B cell (primary cell): ENCODE measurements at regions of chr6 and their contacts with region 1.

Region 1: DNA sequence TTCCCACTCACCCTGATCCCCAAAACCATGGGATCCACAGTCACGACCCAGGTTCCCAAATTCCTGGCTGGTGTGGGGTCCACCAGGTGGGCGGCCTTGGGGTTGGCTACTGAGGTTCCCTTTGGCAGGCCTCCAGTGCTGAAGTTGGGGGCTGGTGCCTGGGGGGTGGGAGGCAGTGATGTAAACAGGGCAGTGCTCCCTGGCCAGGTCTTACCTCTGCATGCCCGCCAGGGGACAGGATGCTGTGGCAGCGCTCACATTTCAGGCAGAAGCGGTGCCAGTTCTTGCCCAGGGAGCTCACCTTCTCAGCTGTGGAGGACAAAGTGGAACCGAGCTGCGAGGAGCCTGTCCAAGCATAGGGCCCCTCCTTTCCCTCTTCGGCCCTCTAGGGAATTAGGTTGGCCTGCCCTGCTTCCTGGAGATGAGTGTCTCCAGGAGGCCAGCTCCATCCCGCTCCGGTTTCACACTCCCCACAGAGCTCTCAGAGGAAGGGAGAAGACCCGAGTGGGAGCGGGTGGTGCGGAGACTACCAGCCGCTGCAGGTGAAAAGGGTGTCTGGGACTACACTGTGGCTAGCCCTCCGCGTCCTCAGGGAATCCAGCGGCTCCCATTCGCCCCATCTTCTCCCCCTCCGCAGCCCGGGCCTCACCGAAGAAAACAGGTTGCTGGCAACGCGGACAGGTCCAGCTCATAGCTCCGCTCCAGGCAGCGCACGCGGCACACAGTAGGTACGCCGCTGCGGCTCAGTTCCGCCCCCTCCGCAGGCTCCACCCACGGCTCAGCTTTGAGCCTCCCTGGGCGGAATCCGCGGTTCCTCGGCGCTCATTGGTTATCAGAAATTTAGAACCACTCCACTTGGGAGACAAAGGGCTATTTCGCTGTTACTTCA is at the start of gene CRIP3:
- DNase-seq: peak; percentile 77
- ATAC-seq: peak; percentile 77
- H3K4me3 ChIP-seq: peak within 1 kb of the TSS in 4 of 5 experiments; percentile 52 to 68 (median 60)
- H3K4me3 Mint-ChIP-seq: peak within 1 kb of the TSS; percentile 92
- H3K27ac ChIP-seq: peak within 1 kb of the TSS; percentile 6 to 15
- H3K27ac Mint-ChIP-seq: peak within 1 kb of the TSS; percentile 71
- H3K4me1 ChIP-seq: peaks cover 40 to 43% of the 10 kb centered on the region in 2 donors
- H3K4me1 Mint-ChIP-seq: peaks cover 43% of the 10 kb centered on the region
- H3K27me3 ChIP-seq: no peaks in the 10 kb centered on the region
- H3K27me3 Mint-ChIP-seq: no peaks in the 10 kb centered on the region
- CTCF ChIP-seq: peak; percentile 74
- total RNA-seq, gene CRIP3: 25.8 and 27.9 TPM in 2 replicates

Region 2: GRCh38 chr6:43263314-43264178 is 44.8 kb before region 1 on chr6:
- CTCF ChIA-PET with region 1: interaction called, 10 read pairs
- POLR2A ChIA-PET with region 1: no interaction called
- intact Hi-C with region 1: no loop called
- DNase-seq: peak; percentile 84
- ATAC-seq: peak; percentile 98
- H3K4me3 ChIP-seq: no peak overlapping the region
- H3K4me3 Mint-ChIP-seq: no peak overlapping the region
- H3K27ac ChIP-seq: no peak overlapping the region
- H3K27ac Mint-ChIP-seq: no peak overlapping the region
- H3K4me1 ChIP-seq: no peaks in the 10 kb centered on the region
- H3K4me1 Mint-ChIP-seq: peaks cover 8% of the 10 kb centered on the region
- H3K27me3 ChIP-seq: peaks cover 0 to under 1% (median 0%) of the 10 kb centered on the region in 4 experiments
- H3K27me3 Mint-ChIP-seq: peaks cover 4% of the 10 kb centered on the region
- CTCF ChIP-seq: peak; percentile 84

Region 3: GRCh38 chr6:43297644-43298564 is 10.4 kb before region 1 on chr6 and contains the start of gene SLC22A7:
- CTCF ChIA-PET with region 1: interaction called, 19 read pairs
- POLR2A ChIA-PET with region 1: no interaction called
- intact Hi-C with region 1: no loop called
- DNase-seq: no peak
- ATAC-seq: no peak
- H3K4me3 ChIP-seq: no peak within 1 kb of the TSS
- H3K4me3 Mint-ChIP-seq: no peak within 1 kb of the TSS
- H3K27ac ChIP-seq: no peak within 1 kb of the TSS
- H3K27ac Mint-ChIP-seq: no peak within 1 kb of the TSS
- H3K4me1 ChIP-seq: no peaks in the 10 kb centered on the region
- H3K4me1 Mint-ChIP-seq: peaks cover 4% of the 10 kb centered on the region
- H3K27me3 ChIP-seq: peaks cover 0 to 19% (median 1%) of the 10 kb centered on the region in 4 experiments
- H3K27me3 Mint-ChIP-seq: peaks cover 14% of the 10 kb centered on the region
- CTCF ChIP-seq: no peak
- total RNA-seq, gene SLC22A7: not detected in 2 replicates

Region 4: GRCh38 chr6:43334466-43335095 is 26.2 kb after region 1 on chr6:
- CTCF ChIA-PET with region 1: interaction called, 48 read pairs
- POLR2A ChIA-PET with region 1: interaction called, 3 read pairs
- intact Hi-C with region 1: loop called (anchors 1 kb)
- DNase-seq: peak; percentile 49
- ATAC-seq: no peak
- H3K4me3 ChIP-seq: no peak overlapping the region
- H3K4me3 Mint-ChIP-seq: no peak overlapping the region
- H3K27ac ChIP-seq: peak overlapping the region in 1 of 2 donors; percentile 48
- H3K27ac Mint-ChIP-seq: peak overlapping the region; percentile 57
- H3K4me1 ChIP-seq: peaks cover 28 to 29% of the 10 kb centered on the region in 2 donors
- H3K4me1 Mint-ChIP-seq: peaks cover 43% of the 10 kb centered on the region
- H3K27me3 ChIP-seq: no peaks in the 10 kb centered on the region
- H3K27me3 Mint-ChIP-seq: no peaks in the 10 kb centered on the region
- CTCF ChIP-seq: peak; percentile 51

Region 5: GRCh38 chr6:43369174-43370022 is 61.1 kb after region 1 on chr6 and contains the start of gene ZNF318:
- CTCF ChIA-PET with region 1: interaction called, 12 read pairs
- POLR2A ChIA-PET with region 1: interaction called, 5 read pairs
- intact Hi-C with region 1: loop called (anchors 5 kb)
- DNase-seq: peak; percentile 98
- ATAC-seq: peak; percentile 90
- H3K4me3 ChIP-seq: peak within 1 kb of the TSS; percentile 83 to 95 (median 88)
- H3K4me3 Mint-ChIP-seq: peak within 1 kb of the TSS; percentile 98
- H3K27ac ChIP-seq: peak within 1 kb of the TSS; percentile 92 to 94
- H3K27ac Mint-ChIP-seq: peak within 1 kb of the TSS; percentile 97
- H3K4me1 ChIP-seq: peaks cover 64 to 69% of the 10 kb centered on the region in 2 donors
- H3K4me1 Mint-ChIP-seq: peaks cover 72% of the 10 kb centered on the region
- H3K27me3 ChIP-seq: no peaks in the 10 kb centered on the region
- H3K27me3 Mint-ChIP-seq: no peaks in the 10 kb centered on the region
- CTCF ChIP-seq: no peak
- total RNA-seq, gene ZNF318: 79.7 and 80.9 TPM in 2 replicates

Region 6: GRCh38 chr6:43391440-43392031 is 83.2 kb after region 1 on chr6:
- CTCF ChIA-PET with region 1: interaction called, 28 read pairs
- POLR2A ChIA-PET with region 1: no interaction called
- intact Hi-C with region 1: no loop called
- DNase-seq: no peak
- ATAC-seq: no peak
- H3K4me3 ChIP-seq: no peak overlapping the region
- H3K4me3 Mint-ChIP-seq: peak overlapping the region; percentile 20
- H3K27ac ChIP-seq: no peak overlapping the region
- H3K27ac Mint-ChIP-seq: no peak overlapping the region
- H3K4me1 ChIP-seq: peaks cover 22 to 23% of the 10 kb centered on the region in 2 donors
- H3K4me1 Mint-ChIP-seq: peaks cover 25% of the 10 kb centered on the region
- H3K27me3 ChIP-seq: peaks cover 0 to 13% (median 7%) of the 10 kb centered on the region in 4 experiments
- H3K27me3 Mint-ChIP-seq: peaks cover 16% of the 10 kb centered on the region
- CTCF ChIP-seq: no peak